Panc1 (cell line): ENCODE measurements at regions of chr14 and their contacts with region 1.

Region 1: DNA sequence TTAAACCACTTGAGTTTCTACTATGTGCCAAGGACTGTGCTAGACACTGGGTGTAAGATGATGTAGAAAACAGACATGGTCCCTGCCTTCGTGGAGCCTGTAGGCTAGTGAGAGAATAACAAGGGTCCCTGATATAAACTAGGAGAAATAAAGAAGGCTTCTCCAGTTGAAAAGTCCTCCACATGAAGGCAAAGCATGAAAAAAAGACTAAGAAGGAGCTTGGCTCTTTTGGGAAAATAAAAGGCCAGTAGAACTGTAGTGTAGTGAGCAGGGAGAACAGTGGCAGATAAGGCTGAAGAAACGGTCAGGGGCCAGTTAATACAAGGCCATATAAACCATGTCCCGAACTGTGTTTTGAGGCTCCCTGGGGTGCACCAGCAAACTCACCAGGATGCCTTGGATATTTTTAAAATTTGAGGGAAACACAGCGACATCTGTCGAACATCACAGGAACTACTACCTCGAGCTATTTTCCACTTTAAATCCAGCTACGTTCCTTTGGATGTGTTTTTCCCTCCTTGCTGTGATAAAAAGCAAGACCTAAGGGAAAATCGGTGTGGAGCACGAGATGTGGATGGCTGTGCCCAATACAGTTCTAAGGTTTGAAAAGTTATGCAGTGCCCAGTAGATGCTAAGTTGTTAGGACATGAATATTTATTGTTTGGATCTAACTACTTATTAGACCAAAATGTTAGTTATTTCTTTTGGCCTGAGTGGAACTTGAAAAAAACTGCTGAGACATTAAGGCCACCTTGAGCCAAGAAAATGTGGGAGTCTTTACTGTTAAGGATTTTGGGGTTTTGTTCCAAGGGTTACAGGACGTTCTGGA is 8.5 kb upstream of the CFL2 start:
- DNase-seq: no peak
- ATAC-seq: peak; percentile 79
- H3K4me3 ChIP-seq: no peak overlapping the region
- H3K27ac ChIP-seq: peak overlapping the region; percentile 84
- H3K4me1 ChIP-seq: 0 out of 2 replicates have a peak, but pooled peaks cover 6% of the 10 kb centered on the region
- H3K27me3 ChIP-seq: no peaks in the 10 kb centered on the region
- CTCF ChIP-seq: peak; percentile 85

Region 2: GRCh38 chr14:34671716-34672115 is 51.2 kb before region 1 on chr14:
- CTCF ChIA-PET with region 1: interaction called, 4 read pairs
- POLR2A ChIA-PET with region 1: interaction called, 3 read pairs
- in situ Hi-C with region 1: no loop called
- intact Hi-C with region 1: loop called (anchors 2 kb)
- DNase-seq: no peak
- ATAC-seq: no peak
- H3K4me3 ChIP-seq: no peak overlapping the region
- H3K27ac ChIP-seq: no peak overlapping the region
- H3K4me1 ChIP-seq: peaks cover 7% of the 10 kb centered on the region
- H3K27me3 ChIP-seq: no peaks in the 10 kb centered on the region
- CTCF ChIP-seq: no peak

Region 3: GRCh38 chr14:34699873-34700621 is 22.9 kb before region 1 on chr14:
- CTCF ChIA-PET with region 1: interaction called, 10 read pairs
- POLR2A ChIA-PET with region 1: no interaction called
- in situ Hi-C with region 1: no loop called
- intact Hi-C with region 1: no loop called
- DNase-seq: peak; percentile 93
- ATAC-seq: peak; percentile 93
- H3K4me3 ChIP-seq: peak overlapping the region in 1 of 2 experiments; percentile 17; a peak in 1 of 4 replicates
- H3K27ac ChIP-seq: peak overlapping the region; percentile 97
- H3K4me1 ChIP-seq: peaks cover 12% of the 10 kb centered on the region; the same call in 1 of the 2 replicates
- H3K27me3 ChIP-seq: no peaks in the 10 kb centered on the region
- CTCF ChIP-seq: no peak